Head of caudate nucleus (tissue), 42 donors: ENCODE measurements at regions of chr15 and their contacts with region 1.

Region 1: DNA sequence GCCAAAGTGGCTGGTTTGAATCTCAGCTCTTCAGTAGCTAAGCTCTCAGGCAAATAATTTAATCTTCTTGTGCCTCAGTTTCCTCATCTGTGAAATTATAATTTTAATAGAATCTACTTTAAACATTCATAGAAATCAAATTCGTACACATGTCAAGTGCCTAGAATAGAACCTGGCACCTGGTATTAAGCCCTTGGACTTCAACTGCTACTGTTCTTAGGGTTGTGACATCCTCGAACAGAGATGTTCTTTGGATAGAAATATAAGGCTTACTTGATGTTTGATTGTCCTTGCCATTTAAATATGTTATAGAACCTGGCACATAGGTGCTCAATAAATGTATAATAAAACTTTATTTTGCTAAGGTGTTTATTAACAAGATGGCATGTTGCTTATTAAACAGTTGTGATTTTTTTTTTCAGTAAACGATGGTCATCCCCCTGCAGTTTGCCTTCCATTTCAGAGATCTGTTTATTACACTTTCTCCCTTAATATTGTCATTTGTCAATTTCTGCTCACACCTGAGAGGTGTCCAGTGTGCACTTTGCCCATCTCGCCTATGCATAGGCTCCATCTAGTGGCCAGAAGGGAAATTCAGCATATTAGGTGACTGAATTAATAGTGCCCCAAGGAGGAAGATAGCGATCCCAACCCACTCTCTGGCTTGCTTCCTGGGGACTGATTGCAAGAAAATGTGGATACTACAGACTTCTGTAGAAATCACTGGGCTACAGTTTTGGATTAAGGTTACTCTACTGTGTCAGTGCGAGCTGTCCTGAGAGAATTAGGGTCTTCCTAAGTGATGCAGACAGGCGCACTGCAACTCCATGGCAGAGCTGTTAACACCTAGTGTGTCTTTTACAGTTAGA is 10.7 kb downstream of the IGF1R start:
- DNase-seq: peak in 16 of 42 donors; percentile 21 to 81 (median 46)

Region 2: DNA sequence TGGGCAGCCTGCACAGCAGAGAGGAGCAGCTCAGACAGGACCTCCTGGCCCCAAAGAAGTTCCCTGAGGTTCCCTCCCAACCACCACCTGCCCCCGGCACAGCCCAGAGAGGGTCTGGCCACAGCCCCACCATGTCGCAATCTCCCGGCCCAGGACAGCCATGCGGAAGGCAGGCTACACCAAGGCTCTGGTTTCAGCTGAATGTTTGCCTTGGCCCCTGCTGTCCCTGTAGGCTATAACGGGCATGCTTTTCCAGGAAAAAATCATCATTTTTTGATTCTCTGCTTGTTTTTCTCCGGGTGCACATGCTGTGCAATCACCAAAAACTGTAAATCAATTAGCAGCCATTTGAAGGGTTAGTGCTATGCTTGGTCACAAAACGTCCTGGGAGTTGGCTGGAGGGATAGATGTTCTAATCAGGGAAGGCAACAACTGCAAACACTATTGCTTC is 153.5 kb before region 1 on chr15:
- intact Hi-C with region 1: no loop called
- DNase-seq: no peak

Region 3: GRCh38 chr15:98727115-98728085 is 68.3 kb after region 1 on chr15:
- intact Hi-C with region 1: no loop called
- DNase-seq: peak in 32 of 42 donors; percentile 13 to 81 (median 40)

Region 4: DNA sequence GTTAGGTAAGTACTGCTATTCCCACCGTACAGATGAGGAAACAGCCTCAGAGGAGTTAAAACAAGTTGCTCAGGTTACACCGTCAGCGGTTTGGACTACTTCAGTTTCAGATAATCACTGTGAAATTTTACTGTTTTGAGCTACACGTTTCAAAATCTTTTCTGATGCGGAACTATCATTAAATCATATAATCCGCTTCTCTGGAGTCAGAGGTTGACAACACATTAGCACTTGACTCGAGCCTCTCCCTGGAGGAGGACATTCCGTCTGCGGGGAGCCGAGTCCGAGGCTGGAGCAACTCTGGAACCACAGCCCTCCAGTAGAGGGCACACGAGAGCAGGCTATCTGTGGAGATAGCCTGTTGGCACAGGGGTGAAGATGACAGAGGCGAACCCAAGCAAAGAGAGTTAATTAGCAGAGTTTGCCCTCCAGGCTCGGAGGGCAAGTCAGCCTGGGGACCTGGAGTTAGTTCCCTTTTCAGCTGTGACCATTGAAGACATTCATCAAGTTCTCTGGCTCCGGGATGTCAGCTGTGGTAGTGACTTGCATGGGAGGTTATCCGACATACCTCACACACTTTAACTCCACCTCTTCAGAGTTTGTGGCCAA is 120.5 kb after region 1 on chr15:
- intact Hi-C with region 1: loop called (anchors 5 kb)
- DNase-seq: peak; percentile 60 to 94 (median 84)

Region 5: GRCh38 chr15:98881526-98882520 is 222.8 kb after region 1 on chr15:
- intact Hi-C with region 1: no loop called
- DNase-seq: no peak

Region 6: GRCh38 chr15:99059010-99059981 is 400.2 kb after region 1 on chr15:
- intact Hi-C with region 1: loop called (anchors 10 kb)
- DNase-seq: peak in 40 of 42 donors; percentile 18 to 80 (median 62)